ENCODE measurements at regions of chr16 and their contacts with region 1.

Region 1: GRCh38 chr16:87853411-87854052 is 15.8 kb downstream of the SLC7A5 start:
- DNase-seq: peak; percentile 88
- CTCF ChIP-seq: no peak

Region 2: DNA sequence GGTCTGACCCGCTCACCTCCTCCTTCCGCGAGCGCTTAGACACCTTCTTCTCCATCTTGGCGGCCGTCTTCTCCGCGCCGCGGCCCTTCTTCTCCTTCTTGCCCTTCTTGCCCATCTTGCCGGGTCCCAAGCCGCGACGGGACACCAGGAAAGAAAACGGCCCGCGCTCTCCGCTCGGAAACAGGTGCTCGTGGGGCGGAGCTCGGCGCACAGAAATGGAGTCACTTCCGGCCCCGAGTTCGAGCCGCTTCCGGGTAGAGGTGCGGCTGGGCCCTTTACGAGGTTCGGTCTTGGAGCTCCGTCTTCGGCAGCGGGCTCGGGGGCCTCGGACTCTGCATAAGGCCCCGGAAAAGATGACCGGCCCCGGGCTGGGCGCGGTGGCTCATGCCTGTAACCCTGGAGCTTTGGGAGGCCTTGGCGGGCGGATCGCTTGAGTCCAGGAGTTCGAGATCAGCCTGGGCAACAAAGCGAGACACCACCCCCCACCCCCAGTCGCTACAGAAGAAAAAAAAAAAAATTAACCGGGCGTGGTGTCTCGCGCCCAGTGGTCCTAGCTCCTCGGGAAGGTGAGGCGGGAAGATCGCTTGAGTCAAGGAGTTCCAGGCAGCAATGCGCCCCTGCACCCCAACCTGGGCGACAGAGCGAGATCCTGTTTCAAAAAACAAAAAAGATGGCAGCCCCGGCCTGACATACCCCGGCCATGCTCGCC is 87.6 kb before region 1 on chr16 and contains the start of gene KLHDC4:
- CTCF ChIA-PET with region 1: interaction called, 10 read pairs
- POLR2A ChIA-PET with region 1: no interaction called
- DNase-seq: peak; percentile 95
- CTCF ChIP-seq: no peak

Region 3: GRCh38 chr16:87815567-87815966 is 38.0 kb before region 1 on chr16:
- CTCF ChIA-PET with region 1: interaction called, 32 read pairs
- POLR2A ChIA-PET with region 1: no interaction called
- DNase-seq: no peak
- CTCF ChIP-seq: no peak

Region 4: DNA sequence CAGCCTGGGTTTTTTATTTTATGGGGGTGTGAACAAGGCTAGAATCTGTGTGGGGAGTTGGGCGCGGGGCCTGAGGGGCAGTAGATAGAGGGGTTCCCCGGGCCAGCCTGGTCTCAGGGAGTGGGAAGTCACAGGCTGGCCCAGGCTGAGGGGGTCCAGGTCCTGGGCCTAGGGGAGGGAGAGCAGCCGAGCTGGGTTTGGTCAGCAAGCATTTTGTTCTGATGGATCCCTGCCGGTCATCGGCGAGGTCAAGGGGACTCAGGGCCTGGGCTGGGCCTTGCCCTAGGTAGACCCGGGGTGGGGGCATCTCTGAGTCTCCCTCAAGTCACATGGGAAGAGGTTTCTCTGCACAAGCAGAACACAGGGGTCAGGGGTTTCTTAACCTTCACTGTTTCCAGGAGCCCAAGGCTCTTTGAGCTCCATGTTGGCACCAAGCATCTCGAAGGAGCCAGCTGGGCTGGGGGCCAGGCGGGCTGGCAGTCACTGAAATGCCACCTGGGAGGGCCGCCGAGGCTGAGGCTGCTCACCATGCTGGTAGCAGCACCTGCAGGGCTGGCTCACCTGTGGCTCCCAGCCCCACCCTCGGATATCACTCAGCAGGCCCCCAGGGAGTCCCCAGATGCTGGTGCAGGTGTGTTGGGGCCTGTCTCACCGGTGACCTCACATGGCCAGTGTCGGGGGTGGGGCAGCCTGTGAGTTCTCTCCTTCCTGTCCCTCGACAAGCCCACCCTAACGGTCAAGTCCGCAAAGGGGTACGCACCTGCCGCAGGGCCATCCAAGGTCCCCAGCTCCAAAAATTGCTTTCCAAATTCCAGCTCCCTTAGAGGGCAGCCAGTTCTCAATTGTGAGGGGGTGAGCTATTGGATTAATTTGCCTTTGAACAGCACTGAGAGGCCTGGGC is 25.2 kb before region 1 on chr16:
- CTCF ChIA-PET with region 1: interaction called, 21 read pairs
- POLR2A ChIA-PET with region 1: no interaction called
- DNase-seq: no peak
- CTCF ChIP-seq: no peak

Region 5: DNA sequence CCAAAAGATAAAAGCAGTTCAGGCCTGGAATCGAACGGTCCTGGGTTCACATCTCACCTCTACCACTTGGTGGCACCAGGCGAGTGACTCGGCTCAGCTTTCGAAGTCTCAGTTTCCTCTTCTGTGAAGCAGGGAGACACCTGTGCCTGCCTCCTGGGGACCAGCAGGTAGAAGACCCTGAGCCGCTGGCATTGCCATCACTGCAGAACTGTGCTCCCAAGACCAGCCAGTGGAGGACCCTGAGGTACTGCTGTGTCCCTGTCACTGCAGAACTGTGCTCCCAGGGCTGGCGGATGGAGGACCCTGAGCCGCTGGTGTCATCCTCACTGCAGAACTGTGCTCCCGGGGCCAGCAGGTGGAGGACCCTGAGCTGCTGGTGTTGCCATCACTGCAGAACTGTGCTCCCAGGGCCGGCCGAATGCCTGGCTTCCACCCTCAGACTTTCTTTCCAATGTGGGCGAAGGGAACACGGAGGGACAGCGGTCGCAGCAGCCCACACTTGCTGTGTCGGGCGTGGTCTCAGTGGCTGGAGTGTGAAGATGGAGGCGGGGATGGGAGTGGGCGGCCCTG is 24.5 kb after region 1 on chr16:
- CTCF ChIA-PET with region 1: interaction called, 28 read pairs
- POLR2A ChIA-PET with region 1: no interaction called
- DNase-seq: no peak
- CTCF ChIP-seq: peak; percentile 25

Region 6: GRCh38 chr16:87930456-87930855 is 76.9 kb after region 1 on chr16:
- CTCF ChIA-PET with region 1: no interaction called
- POLR2A ChIA-PET with region 1: no interaction called
- DNase-seq: no peak
- CTCF ChIP-seq: peak; percentile 20

Region 7: GRCh38 chr16:88035292-88035691 is 181.8 kb after region 1 on chr16:
- CTCF ChIA-PET with region 1: no interaction called
- POLR2A ChIA-PET with region 1: no interaction called
- DNase-seq: no peak
- CTCF ChIP-seq: no peak